ENCODE measurements at regions of chr7 and their contacts with region 1.

Region 1: GRCh38 chr7:155298834-155299534 is 1.3 kb downstream of the INSIG1 start:
- DNase-seq: peak; percentile 84 to 88
- H3K4me3 ChIP-seq: peak overlapping the region; percentile 83
- H3K4me3 Mint-ChIP-seq: peak overlapping the region; percentile 96
- H3K27ac Mint-ChIP-seq: peak overlapping the region; percentile 37
- H3K4me1 ChIP-seq: peaks cover 20% of the 10 kb centered on the region
- H3K4me1 Mint-ChIP-seq: peaks cover 14% of the 10 kb centered on the region
- H3K27me3 ChIP-seq: no peaks in the 10 kb centered on the region
- H3K27me3 Mint-ChIP-seq: no peaks in the 10 kb centered on the region
- CTCF ChIP-seq: no peak

Region 2: GRCh38 chr7:155003376-155004214 is 295.4 kb before region 1 on chr7:
- CTCF ChIA-PET with region 1: no interaction called
- POLR2A ChIA-PET with region 1: interaction called, 4 read pairs
- intact Hi-C with region 1: loop called (anchors 5 kb)
- DNase-seq: peak; percentile 86 to 90
- H3K4me3 ChIP-seq: peak overlapping the region; percentile 99
- H3K4me3 Mint-ChIP-seq: peak overlapping the region; percentile 90
- H3K27ac Mint-ChIP-seq: peak overlapping the region; percentile 93
- H3K4me1 ChIP-seq: 0 out of 2 replicates have a peak, but pooled peaks cover 5% of the 10 kb centered on the region
- H3K4me1 Mint-ChIP-seq: no peaks in the 10 kb centered on the region
- H3K27me3 ChIP-seq: no peaks in the 10 kb centered on the region
- H3K27me3 Mint-ChIP-seq: no peaks in the 10 kb centered on the region
- CTCF ChIP-seq: no peak

Region 3: GRCh38 chr7:155163696-155164095 is 135.3 kb before region 1 on chr7:
- CTCF ChIA-PET with region 1: no interaction called
- POLR2A ChIA-PET with region 1: no interaction called
- intact Hi-C with region 1: no loop called
- DNase-seq: no peak
- H3K4me3 ChIP-seq: no peak overlapping the region
- H3K4me3 Mint-ChIP-seq: no peak overlapping the region
- H3K27ac Mint-ChIP-seq: no peak overlapping the region
- H3K4me1 ChIP-seq: no peaks in the 10 kb centered on the region
- H3K4me1 Mint-ChIP-seq: no peaks in the 10 kb centered on the region
- H3K27me3 ChIP-seq: no peaks in the 10 kb centered on the region
- H3K27me3 Mint-ChIP-seq: peaks cover 2% of the 10 kb centered on the region
- CTCF ChIP-seq: no peak

Region 4: DNA sequence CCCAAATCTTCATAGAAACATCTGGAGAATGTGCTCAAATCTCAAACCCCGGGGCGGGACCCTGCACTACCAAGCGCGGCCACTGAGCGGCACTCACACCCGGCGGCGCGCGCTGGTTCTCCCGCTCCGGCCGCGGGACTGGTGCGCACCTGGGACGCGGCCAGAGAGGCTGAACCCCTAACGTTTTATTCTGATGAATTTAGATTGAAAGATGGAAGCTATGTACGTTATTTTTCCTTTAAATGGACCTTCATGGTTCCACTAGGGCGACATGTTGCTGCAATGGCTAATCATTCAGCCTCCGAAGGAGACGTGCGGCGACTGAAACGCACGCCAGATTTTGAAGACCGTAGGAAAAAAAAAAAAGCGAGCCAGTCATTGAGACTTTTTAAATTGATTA is 108.3 kb before region 1 on chr7:
- CTCF ChIA-PET with region 1: no interaction called
- POLR2A ChIA-PET with region 1: no interaction called
- intact Hi-C with region 1: loop called (anchors 1 kb)
- DNase-seq: peak in 1 of 2 experiments; percentile 82
- H3K4me3 ChIP-seq: no peak overlapping the region
- H3K4me3 Mint-ChIP-seq: peak overlapping the region; percentile 33
- H3K27ac Mint-ChIP-seq: no peak overlapping the region
- H3K4me1 ChIP-seq: no peaks in the 10 kb centered on the region
- H3K4me1 Mint-ChIP-seq: no peaks in the 10 kb centered on the region
- H3K27me3 ChIP-seq: no peaks in the 10 kb centered on the region
- H3K27me3 Mint-ChIP-seq: peaks cover 3% of the 10 kb centered on the region
- CTCF ChIP-seq: peak; percentile 86 to 95

Region 5: GRCh38 chr7:155213955-155214740 is 84.8 kb before region 1 on chr7:
- CTCF ChIA-PET with region 1: interaction called, 5 read pairs
- POLR2A ChIA-PET with region 1: interaction called, 9 read pairs
- intact Hi-C with region 1: loop called (anchors 5 kb)
- DNase-seq: peak; percentile 47 to 71
- H3K4me3 ChIP-seq: peak overlapping the region; percentile 33
- H3K4me3 Mint-ChIP-seq: peak overlapping the region; percentile 85
- H3K27ac Mint-ChIP-seq: peak overlapping the region; percentile 83
- H3K4me1 ChIP-seq: peaks cover 17% of the 10 kb centered on the region
- H3K4me1 Mint-ChIP-seq: peaks cover 11% of the 10 kb centered on the region
- H3K27me3 ChIP-seq: no peaks in the 10 kb centered on the region
- H3K27me3 Mint-ChIP-seq: no peaks in the 10 kb centered on the region
- CTCF ChIP-seq: no peak

Region 6: DNA sequence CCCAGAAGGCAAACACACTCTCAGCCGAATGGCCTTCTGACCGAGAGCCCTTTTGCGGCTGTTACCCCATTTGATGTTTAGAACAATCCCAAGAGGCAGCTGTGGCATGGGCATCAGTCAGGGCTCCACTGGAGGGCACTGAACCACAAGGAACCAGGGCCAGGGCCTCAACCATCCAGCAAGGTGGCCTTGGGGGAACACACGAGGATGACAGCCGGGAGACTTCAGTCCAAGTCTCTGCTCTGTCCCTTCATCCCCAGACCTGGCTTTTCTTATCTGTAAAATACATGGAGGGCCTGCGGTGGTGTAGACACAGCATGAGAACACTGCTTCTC is 64.9 kb before region 1 on chr7:
- CTCF ChIA-PET with region 1: interaction called, 6 read pairs
- POLR2A ChIA-PET with region 1: interaction called, 5 read pairs
- intact Hi-C with region 1: loop called (anchors 1 kb)
- DNase-seq: no peak
- H3K4me3 ChIP-seq: no peak overlapping the region
- H3K4me3 Mint-ChIP-seq: no peak overlapping the region
- H3K27ac Mint-ChIP-seq: peak overlapping the region; percentile 87
- H3K4me1 ChIP-seq: peaks cover 62% of the 10 kb centered on the region
- H3K4me1 Mint-ChIP-seq: peaks cover 40% of the 10 kb centered on the region
- H3K27me3 ChIP-seq: no peaks in the 10 kb centered on the region
- H3K27me3 Mint-ChIP-seq: no peaks in the 10 kb centered on the region
- CTCF ChIP-seq: no peak

Region 7: GRCh38 chr7:155324012-155324917 is 25.3 kb after region 1 on chr7:
- CTCF ChIA-PET with region 1: no interaction called
- POLR2A ChIA-PET with region 1: no interaction called
- intact Hi-C with region 1: loop called (anchors 2 kb)
- DNase-seq: no peak
- H3K4me3 ChIP-seq: no peak overlapping the region
- H3K4me3 Mint-ChIP-seq: no peak overlapping the region
- H3K27ac Mint-ChIP-seq: no peak overlapping the region
- H3K4me1 ChIP-seq: peaks cover 18% of the 10 kb centered on the region
- H3K4me1 Mint-ChIP-seq: peaks cover 10% of the 10 kb centered on the region
- H3K27me3 ChIP-seq: no peaks in the 10 kb centered on the region
- H3K27me3 Mint-ChIP-seq: no peaks in the 10 kb centered on the region
- CTCF ChIP-seq: no peak

Measured in Caco-2 (cell line).